ENCODE measurements at regions of chr14 and their contacts with region 1.

Region 1: DNA sequence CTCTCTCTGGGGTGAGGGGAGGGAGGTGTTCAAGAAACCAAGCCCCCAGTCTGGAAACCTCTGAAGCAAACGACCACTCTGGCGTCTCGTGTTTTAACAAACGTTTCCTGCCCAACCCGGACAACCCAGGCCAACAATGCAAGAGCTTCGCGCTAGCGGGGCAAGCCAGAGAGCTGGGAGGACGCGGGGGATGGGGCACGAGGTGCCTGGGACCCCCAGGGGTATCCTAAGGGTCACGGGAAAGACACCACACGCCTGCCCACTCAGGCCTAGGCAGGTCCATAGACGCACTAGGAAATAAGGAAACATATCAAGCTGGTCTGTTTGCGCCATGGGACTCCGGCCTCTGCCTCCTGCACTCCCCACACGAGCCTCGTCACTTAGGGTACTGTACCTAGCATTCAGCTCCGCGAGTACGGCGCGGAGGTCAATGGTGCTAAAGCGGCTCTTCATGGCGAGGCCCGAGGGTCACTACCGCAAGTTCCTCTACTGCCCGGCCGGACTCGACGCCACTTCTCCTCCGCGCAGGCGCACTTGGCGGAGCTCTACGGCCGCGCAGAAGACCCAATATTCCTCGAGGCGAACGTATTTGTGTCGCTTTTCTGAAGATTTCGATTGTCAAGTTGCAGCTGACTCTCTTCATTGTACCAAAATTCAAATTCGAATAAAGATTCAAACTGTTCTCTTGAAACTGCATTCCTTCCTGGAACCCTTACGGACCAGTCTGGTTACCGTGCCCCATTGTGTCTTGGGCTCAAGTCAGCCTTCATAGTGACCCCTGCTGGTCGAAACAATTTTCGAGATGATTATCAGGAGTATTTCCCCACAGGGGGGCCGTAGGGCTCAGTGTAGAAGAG is at the start of gene NEMF:
- DNase-seq: peak; percentile 75 to 84 (median 79)
- H3K4me3 ChIP-seq: peak within 1 kb of the TSS; percentile 83 to 93
- H3K4me3 Mint-ChIP-seq: peak within 1 kb of the TSS; percentile 91 to 98 (median 96)
- H3K27ac ChIP-seq: peak within 1 kb of the TSS; percentile 76
- H3K27ac Mint-ChIP-seq: peak within 1 kb of the TSS; percentile 88 to 99 (median 97)
- H3K4me1 ChIP-seq: peaks cover 37% of the 10 kb centered on the region
- H3K4me1 Mint-ChIP-seq: peaks cover 21 to 53% (median 38%) of the 10 kb centered on the region in 4 donors
- H3K27me3 ChIP-seq: no peaks in the 10 kb centered on the region
- H3K27me3 Mint-ChIP-seq: no peaks in the 10 kb centered on the region
- total RNA-seq, gene NEMF: 104 to 112 TPM

Region 2: DNA sequence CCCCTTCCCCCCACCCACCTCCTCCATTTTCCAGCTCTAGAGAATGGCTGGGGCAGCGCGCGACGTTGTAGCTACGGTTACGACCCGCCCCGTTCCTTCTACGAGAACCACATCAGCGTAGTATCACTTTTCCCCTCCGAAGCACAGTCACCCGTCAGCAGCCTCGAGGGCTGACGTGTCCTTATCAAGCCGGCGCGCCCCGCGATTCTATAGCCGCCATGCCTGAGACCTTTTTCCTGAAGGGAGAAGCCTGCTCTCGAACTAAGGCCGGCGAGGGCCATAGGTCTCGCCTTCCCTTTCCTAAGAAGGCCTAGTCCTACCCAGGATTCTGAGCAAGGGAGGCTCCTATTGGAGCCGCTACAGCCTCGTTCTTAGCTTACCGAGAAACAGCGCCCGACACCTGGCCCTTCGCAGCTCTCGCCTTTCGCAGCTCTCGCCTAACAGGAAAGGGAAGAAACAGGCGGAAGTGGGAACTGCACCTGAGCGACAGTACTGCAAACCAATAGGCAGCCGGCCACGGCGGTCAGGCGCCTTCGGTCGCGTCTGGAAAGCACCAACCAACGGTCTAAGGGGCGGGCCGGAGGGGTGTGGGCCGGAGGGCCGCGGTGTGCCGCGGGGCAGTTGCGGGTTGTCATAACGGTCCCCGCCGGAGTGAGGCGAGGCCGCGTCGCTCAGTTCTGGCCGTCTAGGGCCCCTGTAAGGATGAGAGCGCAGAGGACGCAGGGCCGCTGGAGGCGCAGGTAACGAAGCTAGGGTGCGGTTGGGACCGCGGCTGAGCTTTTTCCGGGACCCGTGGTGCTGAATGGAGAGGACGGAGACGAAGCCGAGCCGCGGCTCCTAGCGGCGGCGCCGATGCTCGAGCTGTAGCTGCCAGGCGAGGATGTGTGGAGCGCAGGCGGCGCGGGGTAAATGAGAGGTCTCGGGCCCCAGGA is 232.1 kb before region 1 on chr14 and contains the starts of genes MGAT2 and RPL36AL:
- CTCF ChIA-PET with region 1: interaction called, 12 read pairs
- POLR2A ChIA-PET with region 1: interaction called, 30 read pairs
- intact Hi-C with region 1: no loop called
- DNase-seq: peak; percentile 95 to 97 (median 96)
- H3K4me3 ChIP-seq: peak within 1 kb of the TSS; percentile 99 to 100
- H3K4me3 Mint-ChIP-seq: peak within 1 kb of the TSS; percentile 95 to 99 (median 96)
- H3K27ac ChIP-seq: peak within 1 kb of the TSS; percentile 98
- H3K27ac Mint-ChIP-seq: peak within 1 kb of the TSS; percentile 98 to 100 (median 99)
- H3K4me1 ChIP-seq: peaks cover 65% of the 10 kb centered on the region
- H3K4me1 Mint-ChIP-seq: peaks cover 34 to 69% (median 43%) of the 10 kb centered on the region in 4 donors
- H3K27me3 ChIP-seq: no peaks in the 10 kb centered on the region
- H3K27me3 Mint-ChIP-seq: no peaks in the 10 kb centered on the region
- total RNA-seq, gene MGAT2: 58.5 to 58.7 TPM
- total RNA-seq, gene RPL36AL: 416 to 441 TPM

Region 3: DNA sequence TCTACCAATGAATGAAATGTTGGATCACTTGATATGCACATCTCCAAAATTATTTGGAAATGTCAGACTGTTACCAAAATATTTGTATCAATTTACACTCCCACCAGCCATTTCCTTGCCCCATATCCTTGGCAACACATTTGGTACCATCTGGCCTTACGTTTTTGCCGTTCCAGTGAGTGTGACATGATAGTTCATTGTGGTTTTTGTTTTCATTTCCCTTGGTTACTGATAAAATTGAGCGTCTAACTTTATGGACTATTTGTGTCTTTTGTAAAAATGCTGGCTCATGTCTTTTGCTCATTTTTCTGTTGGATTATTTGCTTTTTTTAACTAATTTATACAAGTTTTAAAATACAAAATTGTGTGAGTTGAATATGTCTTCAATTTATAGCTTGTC is 148.6 kb before region 1 on chr14:
- CTCF ChIA-PET with region 1: no interaction called
- POLR2A ChIA-PET with region 1: no interaction called
- intact Hi-C with region 1: no loop called
- DNase-seq: no peak
- H3K4me3 ChIP-seq: no peak overlapping the region
- H3K4me3 Mint-ChIP-seq: no peak overlapping the region
- H3K27ac ChIP-seq: no peak overlapping the region
- H3K27ac Mint-ChIP-seq: peak overlapping the region in 1 of 7 donors; percentile 60
- H3K4me1 ChIP-seq: no peaks in the 10 kb centered on the region
- H3K4me1 Mint-ChIP-seq: peaks cover 2 to 12% (median 3%) of the 10 kb centered on the region in 4 donors
- H3K27me3 ChIP-seq: no peaks in the 10 kb centered on the region
- H3K27me3 Mint-ChIP-seq: no peaks in the 10 kb centered on the region

Region 4: GRCh38 chr14:49808780-49809179 is 43.7 kb before region 1 on chr14:
- CTCF ChIA-PET with region 1: no interaction called
- POLR2A ChIA-PET with region 1: no interaction called
- intact Hi-C with region 1: no loop called
- DNase-seq: no peak
- H3K4me3 ChIP-seq: no peak overlapping the region
- H3K4me3 Mint-ChIP-seq: no peak overlapping the region
- H3K27ac ChIP-seq: no peak overlapping the region
- H3K27ac Mint-ChIP-seq: peak overlapping the region in 1 of 7 donors; percentile 31
- H3K4me1 ChIP-seq: no peaks in the 10 kb centered on the region
- H3K4me1 Mint-ChIP-seq: peaks cover 2 to 8% (median 6%) of the 10 kb centered on the region in 4 donors
- H3K27me3 ChIP-seq: no peaks in the 10 kb centered on the region
- H3K27me3 Mint-ChIP-seq: no peaks in the 10 kb centered on the region

Region 5: GRCh38 chr14:49828640-49829039 is 23.9 kb before region 1 on chr14:
- CTCF ChIA-PET with region 1: interaction called, 39 read pairs
- POLR2A ChIA-PET with region 1: interaction called, 3 read pairs
- intact Hi-C with region 1: no loop called
- DNase-seq: no peak
- H3K4me3 ChIP-seq: no peak overlapping the region
- H3K4me3 Mint-ChIP-seq: no peak overlapping the region
- H3K27ac ChIP-seq: no peak overlapping the region
- H3K27ac Mint-ChIP-seq: no peak overlapping the region
- H3K4me1 ChIP-seq: no peaks in the 10 kb centered on the region
- H3K4me1 Mint-ChIP-seq: peaks cover 0 to 9% (median 2%) of the 10 kb centered on the region in 4 donors
- H3K27me3 ChIP-seq: no peaks in the 10 kb centered on the region
- H3K27me3 Mint-ChIP-seq: no peaks in the 10 kb centered on the region

Region 6: DNA sequence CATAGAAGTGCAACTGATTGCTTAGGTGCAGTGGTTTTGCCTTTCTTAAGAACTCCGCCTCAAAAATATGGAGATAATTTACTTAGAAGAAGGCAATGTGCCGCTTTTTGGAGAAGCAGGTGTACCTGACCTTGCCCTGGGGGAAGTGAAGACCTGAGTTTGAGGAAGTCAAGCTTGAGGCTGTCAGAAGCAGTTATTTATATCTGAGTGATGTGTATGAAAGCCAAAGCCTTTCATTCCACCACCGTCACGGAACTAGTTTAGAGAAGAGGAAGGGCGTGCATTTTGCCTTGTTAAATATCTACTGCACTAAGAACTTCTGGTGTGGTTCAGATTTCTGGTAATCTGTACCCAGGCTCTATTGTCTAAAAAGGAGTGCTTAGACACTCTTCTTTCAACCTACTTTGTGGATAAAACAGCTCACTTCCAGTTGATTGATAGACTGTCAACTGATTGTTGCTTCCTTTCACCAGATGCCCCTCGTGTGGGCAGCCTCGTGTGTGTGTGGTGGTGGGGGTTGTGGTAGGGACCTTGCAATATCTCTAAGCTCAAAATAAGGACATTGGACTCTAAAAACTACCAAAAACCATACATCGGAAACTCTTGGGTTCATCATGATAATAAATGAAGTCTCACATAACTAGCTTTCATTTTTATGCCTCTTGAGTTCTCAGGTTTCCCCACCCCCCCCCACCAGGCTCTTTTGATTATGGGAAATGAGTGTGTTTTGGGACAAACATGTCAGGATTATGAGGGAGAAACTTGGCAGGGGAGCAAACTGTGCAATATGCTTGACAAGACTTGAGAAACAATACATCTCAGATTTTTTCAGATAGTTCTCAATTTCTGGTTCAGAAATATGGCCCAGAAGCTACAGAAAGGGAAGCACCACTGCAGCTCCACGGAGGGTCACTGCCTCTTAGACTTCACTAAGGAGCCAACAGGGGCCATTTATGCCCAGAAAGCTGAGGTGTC is 118.9 kb after region 1 on chr14:
- CTCF ChIA-PET with region 1: interaction called, 10 read pairs
- POLR2A ChIA-PET with region 1: interaction called, 12 read pairs
- intact Hi-C with region 1: no loop called
- DNase-seq: peak; percentile 75 to 85 (median 82)
- H3K4me3 ChIP-seq: peak overlapping the region; percentile 36 to 44
- H3K4me3 Mint-ChIP-seq: peak overlapping the region; percentile 77 to 89 (median 82)
- H3K27ac ChIP-seq: peak overlapping the region; percentile 73
- H3K27ac Mint-ChIP-seq: peak overlapping the region; percentile 87 to 98 (median 96)
- H3K4me1 ChIP-seq: peaks cover 69% of the 10 kb centered on the region
- H3K4me1 Mint-ChIP-seq: peaks cover 44 to 76% (median 62%) of the 10 kb centered on the region in 4 donors
- H3K27me3 ChIP-seq: no peaks in the 10 kb centered on the region
- H3K27me3 Mint-ChIP-seq: no peaks in the 10 kb centered on the region

Region 7: DNA sequence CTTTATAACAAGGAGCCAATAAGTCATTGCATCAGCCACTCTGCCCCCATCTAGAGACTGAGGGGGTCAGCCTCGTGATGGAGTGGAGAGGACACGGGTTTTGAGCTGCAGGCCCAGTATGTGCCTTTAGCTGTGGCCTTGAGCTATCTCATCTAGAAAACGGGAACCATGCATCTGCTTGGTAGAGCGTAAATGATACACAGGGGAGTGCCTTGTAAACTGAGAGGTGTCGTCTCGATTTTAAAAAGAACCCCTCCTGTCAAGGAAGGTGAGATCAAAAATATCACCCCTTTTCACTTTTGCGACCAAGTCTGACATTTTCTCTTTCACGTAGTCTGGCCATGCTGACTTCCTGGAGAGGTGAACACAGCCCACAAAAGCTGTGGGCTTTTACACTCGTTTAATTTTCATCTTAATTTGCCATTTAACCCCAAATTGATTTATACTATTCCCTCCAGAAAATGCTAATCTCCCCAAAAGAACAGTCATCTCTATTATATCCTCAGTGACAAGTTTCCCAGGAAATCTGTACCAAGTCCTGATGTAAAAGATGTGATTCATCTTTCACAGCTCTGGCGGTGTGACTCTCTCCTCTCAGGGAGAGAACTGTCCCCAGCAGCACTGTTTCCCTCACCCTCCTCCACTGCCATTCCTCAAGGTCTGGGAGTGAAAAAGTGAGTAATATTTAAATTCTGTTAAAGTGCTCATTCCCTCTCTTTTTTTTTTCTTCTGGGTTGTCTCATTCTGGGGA is 233.2 kb after region 1 on chr14:
- CTCF ChIA-PET with region 1: interaction called, 7 read pairs
- POLR2A ChIA-PET with region 1: interaction called, 21 read pairs
- intact Hi-C with region 1: no loop called
- DNase-seq: peak; percentile 21 to 48 (median 28)
- H3K4me3 ChIP-seq: no peak overlapping the region
- H3K4me3 Mint-ChIP-seq: peak overlapping the region; percentile 23 to 78 (median 71)
- H3K27ac ChIP-seq: peak overlapping the region; percentile 99
- H3K27ac Mint-ChIP-seq: peak overlapping the region; percentile 83 to 99 (median 95)
- H3K4me1 ChIP-seq: peaks cover 88% of the 10 kb centered on the region
- H3K4me1 Mint-ChIP-seq: peaks cover 58 to 89% (median 76%) of the 10 kb centered on the region in 4 donors
- H3K27me3 ChIP-seq: no peaks in the 10 kb centered on the region
- H3K27me3 Mint-ChIP-seq: no peaks in the 10 kb centered on the region

Region 8: DNA sequence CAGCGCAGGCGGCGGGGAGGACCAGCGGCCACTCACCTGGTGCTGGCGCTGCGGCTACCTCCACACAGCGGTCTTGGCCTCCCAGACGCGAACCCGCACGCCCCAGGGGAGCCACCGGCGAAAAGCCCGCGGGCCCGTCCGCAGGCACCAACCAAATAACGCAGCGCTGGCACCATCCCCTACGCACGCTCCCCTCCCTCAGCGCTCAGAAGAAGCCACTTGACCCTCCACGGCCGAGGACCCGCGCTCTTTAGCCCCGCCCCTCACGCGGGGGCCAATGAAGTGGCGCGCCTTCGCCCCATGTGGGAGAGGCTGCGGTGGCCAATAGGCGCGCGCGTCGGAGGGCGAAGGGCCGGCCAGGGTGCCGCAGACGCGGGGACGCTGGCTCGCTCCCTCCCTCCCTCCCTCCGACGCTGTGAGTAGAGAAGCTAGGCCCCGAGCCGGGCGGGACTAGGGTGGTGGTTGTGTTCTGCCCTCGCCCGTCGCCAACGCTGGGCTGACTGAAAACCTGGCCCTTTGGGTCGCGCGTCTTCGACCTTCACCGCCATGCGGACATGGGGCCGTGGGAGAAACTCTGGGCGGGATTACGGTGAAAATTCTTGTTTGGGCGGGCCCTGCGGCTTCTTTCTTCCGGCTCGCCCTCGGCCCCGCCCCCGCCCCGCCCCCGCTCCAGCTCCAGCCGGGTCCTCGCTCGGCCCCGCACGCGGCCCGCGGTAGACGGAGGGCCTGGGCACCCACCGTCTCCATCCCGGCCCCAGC is 459.6 kb after region 1 on chr14 and contains the starts of genes DMAC2L and L2HGDH:
- CTCF ChIA-PET with region 1: no interaction called
- POLR2A ChIA-PET with region 1: interaction called, 3 read pairs
- intact Hi-C with region 1: loop called (anchors 2 kb)
- DNase-seq: peak; percentile 86 to 91 (median 89)
- H3K4me3 ChIP-seq: peak within 1 kb of the TSS; percentile 77 to 92
- H3K4me3 Mint-ChIP-seq: peak within 1 kb of the TSS; percentile 91 to 98 (median 97)
- H3K27ac ChIP-seq: peak within 1 kb of the TSS; percentile 76
- H3K27ac Mint-ChIP-seq: peak within 1 kb of the TSS; percentile 92 to 99 (median 99)
- H3K4me1 ChIP-seq: peaks cover 30% of the 10 kb centered on the region
- H3K4me1 Mint-ChIP-seq: peaks cover 30 to 47% (median 34%) of the 10 kb centered on the region in 4 donors
- H3K27me3 ChIP-seq: no peaks in the 10 kb centered on the region
- H3K27me3 Mint-ChIP-seq: no peaks in the 10 kb centered on the region
- total RNA-seq, gene DMAC2L: 15.9 to 19.5 TPM
- total RNA-seq, gene L2HGDH: 4.9 to 5.5 TPM

Measured in CD4-positive, alpha-beta memory T cell (primary cell).